Activated T-helper 2 cell treated with anti-CD3 and anti-CD28 coated beads, Interferon-gamma antibody, Interleukin-2, Interleukin-4, amounts not matched to agents 10 μg/mL and 5 μg/mL and 100 μg/mL, durations not matched to agents 14 hours and 24 hours and 36 hours (primary cell): ENCODE measurements at regions of chr9 and their contacts with region 1.

Region 1: GRCh38 chr9:20558566-20559016 is 63.7 kb downstream of the MLLT3 start:
- DNase-seq: no peak
- H3K4me3 Mint-ChIP-seq: no peak overlapping the region
- H3K27ac Mint-ChIP-seq: peak overlapping the region; percentile 54
- H3K4me1 Mint-ChIP-seq: peaks cover 72% of the 10 kb centered on the region
- H3K27me3 Mint-ChIP-seq: no peaks in the 10 kb centered on the region

Region 2: GRCh38 chr9:20508242-20508641 is 50.3 kb before region 1 on chr9:
- intact Hi-C with region 1: loop called (anchors 2 kb)
- DNase-seq: peak; percentile 43
- H3K4me3 Mint-ChIP-seq: no peak overlapping the region
- H3K27ac Mint-ChIP-seq: peak overlapping the region; percentile 3
- H3K4me1 Mint-ChIP-seq: peaks cover 74% of the 10 kb centered on the region
- H3K27me3 Mint-ChIP-seq: no peaks in the 10 kb centered on the region

Region 3: DNA sequence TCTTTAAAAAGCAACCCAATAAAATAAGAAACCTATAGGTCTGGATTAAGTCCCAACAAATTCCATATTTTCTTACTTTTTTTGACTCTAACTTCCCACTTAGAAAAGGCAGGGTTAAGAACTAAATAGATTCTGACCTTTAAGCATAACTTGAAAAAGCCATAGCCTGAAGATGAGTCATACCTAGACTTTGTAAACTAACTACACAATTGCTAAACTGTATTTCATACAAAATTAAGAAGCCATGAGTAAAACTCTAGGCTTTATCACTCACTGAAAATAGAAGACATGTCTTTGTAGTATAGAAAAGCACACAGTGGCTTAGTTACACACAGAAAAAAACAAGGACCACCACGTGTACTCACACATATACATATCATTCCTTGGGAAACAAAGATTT is 12.2 kb after region 1 on chr9:
- intact Hi-C with region 1: loop called (anchors 1 kb)
- DNase-seq: no peak
- H3K4me3 Mint-ChIP-seq: no peak overlapping the region
- H3K27ac Mint-ChIP-seq: no peak overlapping the region
- H3K4me1 Mint-ChIP-seq: peaks cover 48% of the 10 kb centered on the region
- H3K27me3 Mint-ChIP-seq: no peaks in the 10 kb centered on the region

Region 4: GRCh38 chr9:20593551-20593950 is 35.0 kb after region 1 on chr9:
- intact Hi-C with region 1: no loop called
- DNase-seq: no peak
- H3K4me3 Mint-ChIP-seq: no peak overlapping the region
- H3K27ac Mint-ChIP-seq: no peak overlapping the region
- H3K4me1 Mint-ChIP-seq: peaks cover 20% of the 10 kb centered on the region
- H3K27me3 Mint-ChIP-seq: no peaks in the 10 kb centered on the region

Region 5: GRCh38 chr9:20604562-20604961 is 46.0 kb after region 1 on chr9:
- intact Hi-C with region 1: loop called (anchors 2 kb)
- DNase-seq: no peak
- H3K4me3 Mint-ChIP-seq: peak overlapping the region; percentile 49
- H3K27ac Mint-ChIP-seq: no peak overlapping the region
- H3K4me1 Mint-ChIP-seq: peaks cover 58% of the 10 kb centered on the region
- H3K27me3 Mint-ChIP-seq: no peaks in the 10 kb centered on the region

Region 6: GRCh38 chr9:20684035-20684872 is 125.7 kb after region 1 on chr9 and contains the start of gene FOCAD:
- intact Hi-C with region 1: loop called (anchors 2 kb)
- DNase-seq: peak; percentile 96
- H3K4me3 Mint-ChIP-seq: peak within 1 kb of the TSS; percentile 87
- H3K27ac Mint-ChIP-seq: peak within 1 kb of the TSS; percentile 82
- H3K4me1 Mint-ChIP-seq: peaks cover 21% of the 10 kb centered on the region
- H3K27me3 Mint-ChIP-seq: no peaks in the 10 kb centered on the region
- total RNA-seq, gene FOCAD: 32.2 and 36.0 TPM in 2 replicates

Region 7: DNA sequence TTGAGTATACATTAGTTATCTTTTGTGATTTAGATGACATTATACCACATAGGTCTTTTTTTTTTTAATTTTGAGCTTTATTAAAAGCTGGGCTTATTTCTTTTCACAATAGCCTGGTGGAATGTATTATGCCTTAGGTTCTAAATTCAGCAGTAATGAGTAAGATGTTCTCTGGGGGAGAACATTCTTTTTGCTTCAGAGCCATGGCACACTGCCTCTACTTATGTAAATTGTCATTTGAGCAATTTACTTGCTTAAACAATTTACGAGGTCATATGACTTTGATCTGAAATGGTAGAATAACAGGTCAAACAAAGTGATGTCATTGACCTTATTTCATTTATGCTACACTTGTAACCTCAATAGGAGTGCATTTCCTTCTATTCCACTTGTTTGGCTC is 279.6 kb after region 1 on chr9:
- intact Hi-C with region 1: no loop called
- DNase-seq: no peak
- H3K4me3 Mint-ChIP-seq: no peak overlapping the region
- H3K27ac Mint-ChIP-seq: no peak overlapping the region
- H3K4me1 Mint-ChIP-seq: peaks cover 8% of the 10 kb centered on the region
- H3K27me3 Mint-ChIP-seq: no peaks in the 10 kb centered on the region

Region 8: DNA sequence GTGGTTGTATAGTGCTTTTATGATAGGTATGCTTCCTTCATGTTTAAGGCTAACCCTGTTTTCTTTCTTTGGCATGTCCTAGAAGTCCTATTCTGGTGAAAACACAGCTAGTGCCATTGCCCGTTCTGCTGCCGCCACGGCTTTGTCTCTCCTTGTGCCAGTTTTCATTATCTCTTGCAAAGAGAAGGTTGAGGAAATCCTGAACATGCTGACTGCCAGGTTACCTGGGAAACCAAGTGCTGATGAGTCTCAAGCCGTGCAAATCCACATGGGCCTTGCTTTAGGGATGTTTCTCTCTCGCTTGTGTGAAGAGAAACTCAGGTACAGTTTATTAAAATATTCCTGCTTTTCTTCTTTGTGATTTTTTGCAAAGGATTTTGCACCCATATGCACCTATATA is 370.7 kb after region 1 on chr9:
- intact Hi-C with region 1: loop called (anchors 10 kb)
- DNase-seq: no peak
- H3K4me3 Mint-ChIP-seq: no peak overlapping the region
- H3K27ac Mint-ChIP-seq: no peak overlapping the region
- H3K4me1 Mint-ChIP-seq: peaks cover 25% of the 10 kb centered on the region
- H3K27me3 Mint-ChIP-seq: no peaks in the 10 kb centered on the region